ENCODE measurements at regions of chr10 and their contacts with region 1.

Region 1: DNA sequence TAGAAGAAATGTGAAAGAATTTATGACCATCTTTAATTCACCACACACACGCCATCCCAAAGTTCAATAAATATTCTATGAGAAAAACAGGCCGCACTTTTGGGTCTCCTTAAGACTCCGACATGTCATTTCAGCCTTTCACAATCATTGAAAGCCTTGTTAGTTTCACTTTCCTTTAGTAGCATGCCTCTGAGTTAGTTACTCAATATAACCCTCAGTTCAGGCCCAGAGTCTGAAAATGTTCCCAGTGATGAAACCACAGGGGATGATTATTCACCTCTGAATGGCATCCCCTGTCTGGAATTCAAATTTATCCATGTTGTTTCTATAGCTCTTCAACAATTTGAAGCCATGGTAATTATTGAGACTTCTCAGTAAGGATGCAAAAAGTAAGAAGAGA is 278.1 kb upstream of the NRP1 start:
- DNase-seq: no peak
- ATAC-seq: peak; percentile 97

Region 2: GRCh38 chr10:34861293-34862021 is 1248.9 kb after region 1 on chr10:
- intact Hi-C with region 1: loop called (anchors 5 kb)
- DNase-seq: no peak
- ATAC-seq: peak; percentile 82